T-cell (primary cell): ENCODE measurements at regions of chr4 and their contacts with region 1.

Region 1: DNA sequence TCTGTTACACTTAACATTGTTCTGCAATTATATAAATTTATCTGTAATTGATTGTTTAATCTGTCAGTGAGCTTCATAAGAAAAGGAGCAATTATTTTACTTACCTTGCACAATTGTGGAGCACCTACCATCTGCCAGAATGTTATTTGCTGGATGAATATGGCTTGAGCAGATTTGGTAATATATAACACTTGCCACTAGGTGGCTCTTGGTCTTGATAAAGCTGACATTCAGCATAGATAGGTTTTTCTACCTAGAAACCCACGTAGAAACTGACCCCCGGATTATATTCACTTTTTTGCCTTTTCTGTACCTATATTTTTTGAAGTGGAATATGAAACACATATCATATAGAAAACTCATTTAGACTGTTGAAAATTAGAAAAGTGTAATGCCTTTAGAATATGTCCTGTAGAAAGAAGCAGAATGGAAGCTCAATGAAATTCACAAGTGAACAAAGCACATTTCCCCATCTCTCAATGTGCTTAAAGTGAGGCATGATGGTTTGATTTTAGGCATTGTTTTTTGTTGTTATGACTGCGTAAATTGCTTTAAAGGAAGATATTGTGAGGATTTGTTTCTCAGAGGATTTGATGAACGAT is 9.5 kb downstream of the RBPJ start:
- DNase-seq: peak in 4 of 35 experiments; percentile 5 to 71 (median 14)
- ATAC-seq: peak; percentile 68 to 85 (median 81)
- H3K4me3 ChIP-seq: no peak overlapping the region
- H3K4me3 Mint-ChIP-seq: no peak overlapping the region
- H3K27ac ChIP-seq: no peak overlapping the region
- H3K27ac Mint-ChIP-seq: peak overlapping the region in 1 of 2 donors; percentile 58
- H3K4me1 ChIP-seq: peaks cover 0 to 3% of the 10 kb centered on the region in 2 experiments
- H3K4me1 Mint-ChIP-seq: peaks cover 34 to 52% (median 40%) of the 10 kb centered on the region in 3 donors
- H3K27me3 ChIP-seq: no peaks in the 10 kb centered on the region
- H3K27me3 Mint-ChIP-seq: no peaks in the 10 kb centered on the region

Region 2: DNA sequence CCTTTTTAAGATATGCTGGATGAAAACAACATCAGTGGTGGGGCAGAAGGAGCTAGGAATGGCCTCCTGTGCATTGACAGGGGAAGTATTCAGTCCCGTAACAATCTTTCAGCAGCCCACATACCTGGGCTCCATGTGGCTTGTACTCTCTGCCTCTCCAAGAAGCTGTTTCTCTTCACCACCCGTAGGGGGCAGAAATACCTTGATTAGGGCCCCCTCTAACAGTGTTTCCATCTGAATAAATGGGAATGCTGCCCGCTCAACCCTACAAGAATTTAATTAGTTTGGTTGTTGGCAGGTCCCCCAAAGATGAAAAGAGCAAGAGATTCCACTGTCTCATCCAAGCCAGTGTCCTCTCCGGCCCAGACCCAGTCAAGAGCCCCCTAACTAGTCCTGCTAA is 261.1 kb before region 1 on chr4:
- CTCF ChIA-PET with region 1: no interaction called
- POLR2A ChIA-PET with region 1: no interaction called
- DNase-seq: peak in 1 of 35 experiments; percentile 21
- ATAC-seq: no peak
- H3K4me3 ChIP-seq: no peak overlapping the region
- H3K4me3 Mint-ChIP-seq: no peak overlapping the region
- H3K27ac ChIP-seq: no peak overlapping the region
- H3K27ac Mint-ChIP-seq: no peak overlapping the region
- H3K4me1 ChIP-seq: peaks cover 0 to 2% of the 10 kb centered on the region in 2 experiments
- H3K4me1 Mint-ChIP-seq: peaks cover under 1 to 12% (median 3%) of the 10 kb centered on the region in 3 donors
- H3K27me3 ChIP-seq: no peaks in the 10 kb centered on the region
- H3K27me3 Mint-ChIP-seq: peaks cover 0 to 4% of the 10 kb centered on the region in 2 donors

Region 3: DNA sequence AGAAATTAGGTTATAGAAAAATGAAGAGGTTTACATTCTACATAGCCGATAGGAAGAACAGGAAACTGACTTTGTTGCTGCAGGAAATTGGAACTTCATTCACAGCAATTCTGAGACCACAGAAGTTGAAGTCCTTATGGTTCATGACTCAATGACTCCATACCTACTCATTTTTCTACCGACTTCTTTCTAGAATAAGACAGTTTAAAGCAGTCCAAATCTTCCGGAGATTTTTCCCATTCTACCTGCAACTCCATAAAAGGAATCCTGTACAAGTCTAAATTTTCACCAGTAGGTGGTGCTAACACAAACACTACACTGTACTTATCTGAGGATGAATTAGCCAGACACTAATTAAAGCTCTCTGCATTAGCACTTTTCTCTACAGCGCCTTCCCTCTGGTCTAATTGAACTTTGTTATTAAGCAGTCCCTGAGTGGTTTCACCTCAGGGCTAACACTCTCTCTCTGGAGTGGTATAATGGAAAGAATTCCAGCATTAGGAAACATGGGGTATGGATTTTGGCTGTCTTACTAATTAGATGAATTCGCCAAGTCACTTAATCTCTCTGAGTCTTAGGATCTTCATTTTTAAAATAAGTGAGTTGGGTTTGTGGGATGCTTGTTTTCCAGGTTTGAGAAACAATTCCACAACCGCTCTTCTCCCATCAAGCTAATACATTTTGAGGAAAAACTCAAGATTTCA is 248.3 kb before region 1 on chr4:
- CTCF ChIA-PET with region 1: interaction called in 1 of 2 experiments, 22 read pairs
- POLR2A ChIA-PET with region 1: no interaction called
- DNase-seq: peak in 2 of 35 experiments; percentile 13 to 66
- ATAC-seq: peak; percentile 52 to 71 (median 64)
- H3K4me3 ChIP-seq: no peak overlapping the region
- H3K4me3 Mint-ChIP-seq: no peak overlapping the region
- H3K27ac ChIP-seq: no peak overlapping the region
- H3K27ac Mint-ChIP-seq: no peak overlapping the region
- H3K4me1 ChIP-seq: no peaks in the 10 kb centered on the region
- H3K4me1 Mint-ChIP-seq: peaks cover 6 to 19% (median 13%) of the 10 kb centered on the region in 3 donors
- H3K27me3 ChIP-seq: peaks cover 0 to 5% of the 10 kb centered on the region in 2 experiments
- H3K27me3 Mint-ChIP-seq: peaks cover 0 to 27% of the 10 kb centered on the region in 2 donors

Region 4: DNA sequence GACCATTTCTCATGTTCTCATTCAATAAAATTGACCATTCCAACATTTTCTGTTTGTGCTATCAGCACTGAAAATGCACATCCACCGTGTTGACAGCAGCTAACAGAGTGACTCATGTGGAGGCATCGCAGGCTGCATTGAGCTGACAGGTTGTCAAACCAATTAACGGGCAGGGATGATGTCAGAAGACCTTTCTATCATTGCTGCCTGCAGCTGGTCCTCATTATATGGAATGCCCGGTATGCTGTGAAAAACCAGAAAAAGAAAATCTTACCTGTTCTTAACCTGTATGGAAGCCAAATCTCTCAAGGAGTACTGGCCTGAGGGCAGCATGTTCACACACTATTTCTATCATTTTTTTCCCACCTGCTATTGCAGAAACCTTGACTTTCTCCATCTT is 214.2 kb before region 1 on chr4:
- CTCF ChIA-PET with region 1: no interaction called
- POLR2A ChIA-PET with region 1: no interaction called
- DNase-seq: no peak
- ATAC-seq: no peak
- H3K4me3 ChIP-seq: no peak overlapping the region
- H3K4me3 Mint-ChIP-seq: no peak overlapping the region
- H3K27ac ChIP-seq: no peak overlapping the region
- H3K27ac Mint-ChIP-seq: no peak overlapping the region
- H3K4me1 ChIP-seq: no peaks in the 10 kb centered on the region
- H3K4me1 Mint-ChIP-seq: no peaks in the 10 kb centered on the region
- H3K27me3 ChIP-seq: peaks cover 0 to 2% of the 10 kb centered on the region in 2 experiments
- H3K27me3 Mint-ChIP-seq: peaks cover 5 to 8% of the 10 kb centered on the region in 2 donors

Region 5: DNA sequence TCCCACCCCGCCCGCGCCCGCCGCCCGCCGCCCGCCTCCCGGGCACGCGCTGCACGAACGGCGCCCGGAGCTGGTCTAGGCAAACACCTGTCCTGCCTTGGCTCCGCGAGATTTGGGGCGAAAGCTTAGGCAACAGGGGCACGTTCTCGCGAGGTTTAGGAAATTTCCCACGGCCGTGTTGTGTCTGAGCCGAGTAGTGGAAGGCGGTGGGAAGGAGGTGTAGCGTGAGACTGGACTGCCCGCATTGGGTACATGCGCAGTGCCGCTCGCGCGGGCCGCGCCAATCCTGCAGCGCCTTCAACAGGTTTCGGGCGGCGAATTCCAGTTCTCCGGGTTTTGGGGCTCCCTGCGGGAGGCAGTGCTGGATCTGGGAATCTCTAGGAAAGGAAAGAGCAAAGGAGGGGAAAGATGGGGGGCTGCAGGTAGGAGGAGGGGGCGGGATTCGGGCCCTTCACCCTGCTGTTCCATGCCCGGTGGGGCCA is 10.8 kb before region 1 on chr4:
- CTCF ChIA-PET with region 1: interaction called in 1 of 2 experiments, 24 read pairs
- POLR2A ChIA-PET with region 1: no interaction called
- DNase-seq: peak; percentile 89 to 99 (median 94)
- ATAC-seq: peak; percentile 77 to 82 (median 80)
- H3K4me3 ChIP-seq: peak overlapping the region; percentile 86 to 99
- H3K4me3 Mint-ChIP-seq: peak overlapping the region; percentile 91 to 99 (median 99)
- H3K27ac ChIP-seq: peak overlapping the region; percentile 93
- H3K27ac Mint-ChIP-seq: peak overlapping the region; percentile 99 to 100
- H3K4me1 ChIP-seq: peaks cover 17 to 27% of the 10 kb centered on the region in 2 experiments
- H3K4me1 Mint-ChIP-seq: peaks cover 25 to 44% (median 39%) of the 10 kb centered on the region in 3 donors
- H3K27me3 ChIP-seq: no peaks in the 10 kb centered on the region
- H3K27me3 Mint-ChIP-seq: peaks cover 0 to under 1% of the 10 kb centered on the region in 2 donors

Region 6: DNA sequence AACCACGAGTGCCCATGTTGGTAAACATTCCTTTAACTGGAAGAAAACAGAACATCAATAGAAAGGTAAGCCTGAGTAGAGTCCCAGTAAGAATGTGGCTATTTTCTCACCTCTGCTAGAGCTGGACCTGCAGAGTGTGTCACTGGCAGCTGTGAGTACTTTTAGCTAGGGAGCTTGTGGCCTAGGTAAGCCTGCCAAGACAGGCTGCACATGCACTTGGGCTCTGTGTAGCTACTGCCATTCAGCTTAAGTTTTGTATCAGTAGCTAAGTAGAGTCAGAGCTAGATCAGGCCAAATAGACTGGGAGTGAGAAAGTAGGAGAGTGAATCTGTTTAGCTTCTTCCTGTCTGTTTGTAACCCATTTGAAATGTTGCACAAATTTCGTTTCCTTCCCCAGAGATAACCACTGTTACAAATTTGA is 25.8 kb after region 1 on chr4:
- CTCF ChIA-PET with region 1: interaction called, 7 to 10 read pairs
- POLR2A ChIA-PET with region 1: interaction called in 1 of 2 experiments, 12 read pairs
- DNase-seq: peak in 1 of 35 experiments; percentile 13
- ATAC-seq: peak; percentile 27 to 45 (median 42)
- H3K4me3 ChIP-seq: no peak overlapping the region
- H3K4me3 Mint-ChIP-seq: no peak overlapping the region
- H3K27ac ChIP-seq: no peak overlapping the region
- H3K27ac Mint-ChIP-seq: no peak overlapping the region
- H3K4me1 ChIP-seq: peaks cover 10 to 15% of the 10 kb centered on the region in 2 experiments
- H3K4me1 Mint-ChIP-seq: peaks cover 32 to 37% (median 34%) of the 10 kb centered on the region in 3 donors
- H3K27me3 ChIP-seq: no peaks in the 10 kb centered on the region
- H3K27me3 Mint-ChIP-seq: no peaks in the 10 kb centered on the region

Region 7: DNA sequence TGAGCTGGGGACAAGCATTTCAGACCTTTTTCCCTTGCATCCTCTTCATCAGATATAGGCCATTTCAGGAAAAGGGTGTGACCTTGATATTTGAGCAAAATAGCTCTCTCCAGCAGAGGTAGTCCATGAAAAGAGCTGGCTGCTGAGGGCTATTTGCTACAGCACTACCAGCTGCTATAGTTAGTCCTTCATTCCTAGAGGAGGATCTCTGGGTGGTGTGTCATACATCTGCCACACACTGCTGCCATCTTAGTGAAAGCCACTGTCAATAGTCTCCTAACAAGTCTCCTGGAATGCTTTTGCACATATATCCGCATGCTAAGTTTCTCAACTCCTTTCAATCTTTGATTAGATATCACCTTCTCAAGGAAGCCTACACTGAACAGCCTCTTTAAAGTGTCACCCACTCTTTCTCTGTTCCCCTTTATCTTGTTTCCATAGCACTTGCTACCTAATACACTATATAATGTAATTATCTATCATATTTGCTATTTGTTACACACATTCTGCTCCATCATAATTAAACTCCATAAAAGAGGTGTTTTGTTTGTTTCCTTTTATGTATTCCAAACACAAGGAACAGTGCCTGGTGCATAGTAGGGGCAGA is 385.5 kb after region 1 on chr4:
- CTCF ChIA-PET with region 1: no interaction called
- POLR2A ChIA-PET with region 1: no interaction called
- DNase-seq: no peak
- ATAC-seq: no peak
- H3K4me3 ChIP-seq: no peak overlapping the region
- H3K4me3 Mint-ChIP-seq: no peak overlapping the region
- H3K27ac ChIP-seq: no peak overlapping the region
- H3K27ac Mint-ChIP-seq: no peak overlapping the region
- H3K4me1 ChIP-seq: no peaks in the 10 kb centered on the region
- H3K4me1 Mint-ChIP-seq: no peaks in the 10 kb centered on the region
- H3K27me3 ChIP-seq: no peaks in the 10 kb centered on the region
- H3K27me3 Mint-ChIP-seq: no peaks in the 10 kb centered on the region